AG04449 (cell line): ENCODE measurements at regions of chr2 and their contacts with region 1.

Region 1: DNA sequence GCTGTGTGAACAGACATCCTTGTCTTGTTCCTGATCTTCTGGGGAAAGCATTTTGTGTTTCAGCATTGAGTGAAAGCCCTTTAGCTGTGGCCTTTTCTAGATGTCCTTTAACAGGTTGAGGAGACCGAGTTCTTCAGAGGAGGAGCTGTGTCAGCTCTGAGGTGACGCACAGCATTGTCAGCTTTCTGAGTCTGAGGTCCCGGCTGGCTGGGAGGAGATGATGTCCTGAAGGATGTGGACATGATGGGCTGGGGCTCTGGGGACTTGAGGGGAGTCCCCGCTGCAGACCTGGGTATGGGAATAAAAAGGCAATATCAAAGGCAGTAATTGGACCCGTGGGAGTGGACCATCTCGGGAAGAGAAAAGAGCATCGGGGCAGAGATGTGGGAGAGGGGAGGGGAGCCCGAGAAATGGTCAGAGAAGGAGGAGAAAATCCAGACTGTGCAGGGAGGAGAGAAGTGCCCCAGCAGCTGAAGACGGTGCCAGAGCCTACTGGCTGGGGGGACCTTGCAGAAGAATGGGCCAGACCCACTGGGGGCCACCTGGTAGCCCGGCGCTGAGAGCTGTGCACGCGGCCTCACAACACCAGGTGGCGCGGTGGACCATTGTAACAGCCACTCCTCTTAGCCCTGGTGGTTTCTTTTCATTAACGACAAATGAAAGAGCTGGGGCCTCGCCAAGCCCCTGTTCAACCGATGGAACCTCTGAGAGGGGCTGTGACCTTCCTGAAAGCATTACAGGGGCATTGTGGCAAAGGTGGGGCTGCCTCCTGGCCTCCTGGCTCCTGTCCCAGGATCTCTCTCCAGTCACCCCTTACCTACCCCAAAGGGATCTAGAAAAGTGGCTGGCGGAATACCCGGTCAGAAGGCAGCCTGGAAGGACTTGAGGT is 61.6 kb downstream of the ST3GAL5 start:
- DNase-seq: no peak
- H3K4me3 ChIP-seq: no peak overlapping the region; the same call in 1 of the 2 replicates
- CTCF ChIP-seq: peak; percentile 98

Region 2: GRCh38 chr2:85475799-85476490 is 351.3 kb before region 1 on chr2:
- CTCF ChIA-PET with region 1: no interaction called
- POLR2A ChIA-PET with region 1: no interaction called
- DNase-seq: no peak
- H3K4me3 ChIP-seq: no peak overlapping the region
- CTCF ChIP-seq: no peak

Region 3: GRCh38 chr2:85813982-85814801 is 13.0 kb before region 1 on chr2:
- CTCF ChIA-PET with region 1: interaction called, 33 read pairs
- POLR2A ChIA-PET with region 1: no interaction called
- DNase-seq: peak; percentile 34
- H3K4me3 ChIP-seq: no peak overlapping the region
- CTCF ChIP-seq: peak; percentile 100

Region 4: GRCh38 chr2:85852937-85853498 is 25.8 kb after region 1 on chr2:
- CTCF ChIA-PET with region 1: interaction called, 20 read pairs
- POLR2A ChIA-PET with region 1: no interaction called
- DNase-seq: no peak
- H3K4me3 ChIP-seq: peak overlapping the region; percentile 38
- CTCF ChIP-seq: no peak

Region 5: DNA sequence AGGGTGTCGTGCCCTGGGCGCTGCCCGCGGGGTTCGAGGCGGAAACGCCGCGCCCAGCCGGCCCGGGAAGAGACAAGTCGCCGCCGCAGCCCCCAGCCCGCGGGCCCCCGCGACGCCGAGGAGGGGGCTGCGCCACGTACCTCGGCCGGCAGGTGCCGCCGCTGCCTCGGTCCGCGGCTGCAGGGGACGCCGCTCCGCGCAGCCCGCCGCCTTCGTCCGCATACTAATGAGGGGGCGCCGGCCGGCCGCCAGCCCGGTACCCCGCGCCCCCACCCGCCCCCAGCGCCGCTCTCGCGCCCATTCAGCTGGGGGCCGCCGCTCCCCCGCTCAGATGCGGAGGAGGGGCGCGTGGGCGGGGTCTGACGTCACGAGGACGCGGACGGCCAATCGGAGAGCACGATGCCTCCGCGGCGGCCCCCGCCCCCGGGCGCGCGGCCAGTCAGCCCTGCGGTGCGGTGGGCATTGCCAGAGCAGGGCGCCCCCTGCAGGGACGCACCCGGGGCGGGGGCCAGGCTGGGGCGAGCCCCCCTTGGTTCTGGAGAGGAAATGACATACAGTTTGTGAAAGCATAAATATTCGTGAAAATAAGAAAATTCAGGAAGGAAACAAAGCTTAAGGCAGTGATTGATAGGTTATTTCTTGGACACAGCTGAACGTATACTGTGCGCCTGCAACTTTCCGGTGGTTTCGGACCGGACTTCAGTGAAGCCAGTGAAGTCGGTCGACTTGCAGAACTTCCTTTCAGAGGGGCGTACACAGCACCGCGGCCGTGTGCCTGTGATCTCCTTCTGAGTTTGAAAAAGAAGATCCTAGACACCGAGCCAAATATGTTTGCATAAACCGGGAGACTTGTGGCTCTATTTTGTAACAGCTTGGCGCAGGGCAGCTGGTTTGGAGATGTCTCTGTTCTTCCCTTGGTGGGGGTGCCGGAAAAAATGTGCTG is 61.7 kb after region 1 on chr2 and contains the start of gene ST3GAL5:
- CTCF ChIA-PET with region 1: interaction called, 70 read pairs
- POLR2A ChIA-PET with region 1: interaction called, 3 read pairs
- DNase-seq: no peak
- H3K4me3 ChIP-seq: peak within 1 kb of the TSS; percentile 64
- CTCF ChIP-seq: peak; percentile 85

Region 6: DNA sequence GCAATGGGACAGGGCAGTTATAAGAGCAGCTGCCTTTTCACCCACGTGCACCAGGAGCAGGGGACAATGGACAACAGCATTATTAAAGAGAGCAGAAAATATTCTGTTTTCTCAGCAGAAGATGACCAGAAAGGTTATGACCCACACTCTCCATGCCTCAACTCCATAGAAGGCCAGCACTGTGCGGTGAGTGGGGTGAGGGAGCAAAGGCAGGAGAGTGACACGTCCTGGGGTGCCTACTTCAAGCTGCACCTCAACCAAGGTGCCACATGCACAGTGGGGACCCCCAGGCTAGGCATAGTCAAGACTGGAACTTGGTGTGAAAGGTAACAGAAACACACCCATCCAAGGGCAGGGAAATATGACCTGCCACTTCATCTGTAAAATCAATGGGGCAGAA is 228.1 kb after region 1 on chr2:
- CTCF ChIA-PET with region 1: interaction called, 16 read pairs
- POLR2A ChIA-PET with region 1: no interaction called
- DNase-seq: no peak
- H3K4me3 ChIP-seq: no peak overlapping the region
- CTCF ChIP-seq: no peak

Region 7: DNA sequence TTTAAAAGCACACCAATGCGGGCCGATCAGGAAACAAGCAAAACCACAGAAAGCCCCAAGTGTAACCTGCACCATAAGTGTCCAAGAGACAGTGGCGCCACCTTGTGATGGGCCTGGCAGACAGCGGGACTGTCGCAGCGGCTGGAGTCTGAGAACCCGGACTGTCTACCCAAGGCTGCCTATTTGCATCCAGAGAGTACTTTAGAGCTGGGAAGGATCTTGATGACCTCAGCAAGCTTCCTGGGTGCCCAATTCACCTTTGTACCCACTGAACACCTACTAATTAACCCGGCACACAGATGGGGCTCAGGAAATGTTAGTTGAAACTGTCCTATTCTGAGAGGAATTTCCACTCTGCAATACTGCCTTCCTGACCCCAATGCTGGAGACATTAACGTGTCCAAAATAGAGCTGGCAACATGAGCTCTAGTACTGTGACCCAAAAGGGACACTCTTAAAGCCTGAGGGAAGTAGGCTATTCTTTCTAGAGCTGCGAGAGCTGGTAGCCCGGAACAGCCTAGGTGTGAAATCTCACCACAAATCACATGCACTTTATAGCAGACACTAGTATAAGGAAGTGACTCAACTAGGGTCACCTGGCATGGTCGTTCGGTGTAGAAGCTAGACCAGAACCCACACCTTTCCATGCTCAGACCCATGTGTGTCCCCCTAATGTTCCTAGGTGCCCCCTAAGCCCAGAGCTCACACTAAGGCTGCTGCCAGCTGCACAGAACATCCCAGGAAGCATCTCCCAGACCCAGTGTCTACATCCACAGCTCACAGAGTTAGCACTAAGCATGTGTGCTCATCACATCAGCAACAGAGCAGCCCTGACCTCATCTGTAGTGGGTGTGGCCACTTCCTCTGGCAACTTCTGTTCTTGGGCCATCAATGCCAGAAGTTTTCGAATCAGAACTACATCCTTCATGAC is 253.0 kb after region 1 on chr2:
- CTCF ChIA-PET with region 1: interaction called, 891 read pairs
- POLR2A ChIA-PET with region 1: no interaction called
- DNase-seq: no peak
- H3K4me3 ChIP-seq: no peak overlapping the region
- CTCF ChIP-seq: peak; percentile 88